IMR-90 (cell line): ENCODE measurements at regions of chr5 and their contacts with region 1.

Region 1: GRCh38 chr5:9544502-9545135 is 1.3 kb downstream of the SEMA5A start:
- DNase-seq: peak; percentile 80
- ATAC-seq: peak; percentile 48
- H3K4me3 ChIP-seq: peak overlapping the region; percentile 73
- H3K27ac ChIP-seq: peak overlapping the region; percentile 35
- H3K4me1 ChIP-seq: peaks cover 4% of the 10 kb centered on the region
- H3K27me3 ChIP-seq: no peaks in the 10 kb centered on the region
- CTCF ChIP-seq: peak; percentile 96
- POLR2A ChIP-seq: 0 out of 2 replicates have a peak, but pooled peaks have one; percentile 42
- RAD21 ChIP-seq: peak; percentile 91

Region 2: GRCh38 chr5:8247049-8247899 is 1297.3 kb before region 1 on chr5:
- CTCF ChIA-PET with region 1: no interaction called
- POLR2A ChIA-PET with region 1: no interaction called
- dilution Hi-C with region 1: no loop called
- in situ Hi-C with region 1: no loop called
- intact Hi-C with region 1: loop called (anchors 2 kb)
- DNase-seq: peak; percentile 1
- ATAC-seq: peak; percentile 17; the same call in 1 of the 2 replicates
- H3K4me3 ChIP-seq: no peak overlapping the region
- H3K27ac ChIP-seq: no peak overlapping the region
- H3K4me1 ChIP-seq: no peaks in the 10 kb centered on the region
- H3K27me3 ChIP-seq: no peaks in the 10 kb centered on the region
- CTCF ChIP-seq: peak; percentile 33
- POLR2A ChIP-seq: no peak
- RAD21 ChIP-seq: peak; percentile 38; the same call in 1 of the 2 replicates

Region 3: GRCh38 chr5:8848998-8849594 is 695.5 kb before region 1 on chr5:
- CTCF ChIA-PET with region 1: no interaction called
- POLR2A ChIA-PET with region 1: no interaction called
- dilution Hi-C with region 1: no loop called
- in situ Hi-C with region 1: no loop called
- intact Hi-C with region 1: loop called (anchors 5 kb)
- DNase-seq: peak; percentile 89
- ATAC-seq: peak; percentile 56
- H3K4me3 ChIP-seq: no peak overlapping the region
- H3K27ac ChIP-seq: no peak overlapping the region
- H3K4me1 ChIP-seq: peaks cover 10% of the 10 kb centered on the region
- H3K27me3 ChIP-seq: no peaks in the 10 kb centered on the region
- CTCF ChIP-seq: no peak
- POLR2A ChIP-seq: no peak
- RAD21 ChIP-seq: no peak

Region 4: GRCh38 chr5:9265441-9266175 is 279.0 kb before region 1 on chr5:
- CTCF ChIA-PET with region 1: no interaction called
- POLR2A ChIA-PET with region 1: no interaction called
- dilution Hi-C with region 1: no loop called
- in situ Hi-C with region 1: no loop called
- intact Hi-C with region 1: loop called (anchors 5 kb)
- DNase-seq: peak; percentile 99
- ATAC-seq: peak; percentile 98
- H3K4me3 ChIP-seq: peak overlapping the region; percentile 8; the same call in 1 of the 2 replicates
- H3K27ac ChIP-seq: peak overlapping the region; percentile 70
- H3K4me1 ChIP-seq: peaks cover 5% of the 10 kb centered on the region
- H3K27me3 ChIP-seq: no peaks in the 10 kb centered on the region
- CTCF ChIP-seq: 0 out of 2 replicates have a peak, but pooled peaks have one; percentile 1
- POLR2A ChIP-seq: peak; percentile 42; the same call in 1 of the 2 replicates
- RAD21 ChIP-seq: 0 out of 2 replicates have a peak, but pooled peaks have one; percentile 14

Region 5: GRCh38 chr5:9562141-9562540 is 17.5 kb after region 1 on chr5:
- CTCF ChIA-PET with region 1: no interaction called
- POLR2A ChIA-PET with region 1: no interaction called
- dilution Hi-C with region 1: no loop called
- in situ Hi-C with region 1: no loop called
- intact Hi-C with region 1: no loop called
- DNase-seq: no peak
- ATAC-seq: no peak
- H3K4me3 ChIP-seq: no peak overlapping the region
- H3K27ac ChIP-seq: no peak overlapping the region
- H3K4me1 ChIP-seq: peaks cover 2% of the 10 kb centered on the region; the same call in 1 of the 2 replicates
- H3K27me3 ChIP-seq: no peaks in the 10 kb centered on the region
- CTCF ChIP-seq: no peak
- POLR2A ChIP-seq: no peak
- RAD21 ChIP-seq: no peak

Region 6: GRCh38 chr5:9782841-9783560 is 238.4 kb after region 1 on chr5:
- CTCF ChIA-PET with region 1: no interaction called
- POLR2A ChIA-PET with region 1: no interaction called
- dilution Hi-C with region 1: no loop called
- in situ Hi-C with region 1: no loop called
- intact Hi-C with region 1: loop called (anchors 5 kb)
- DNase-seq: peak; percentile 91
- ATAC-seq: peak; percentile 77
- H3K4me3 ChIP-seq: no peak overlapping the region
- H3K27ac ChIP-seq: peak overlapping the region; percentile 76; the same call in 1 of the 2 replicates
- H3K4me1 ChIP-seq: peaks cover 19% of the 10 kb centered on the region
- H3K27me3 ChIP-seq: no peaks in the 10 kb centered on the region
- CTCF ChIP-seq: no peak
- POLR2A ChIP-seq: no peak
- RAD21 ChIP-seq: no peak

Region 7: DNA sequence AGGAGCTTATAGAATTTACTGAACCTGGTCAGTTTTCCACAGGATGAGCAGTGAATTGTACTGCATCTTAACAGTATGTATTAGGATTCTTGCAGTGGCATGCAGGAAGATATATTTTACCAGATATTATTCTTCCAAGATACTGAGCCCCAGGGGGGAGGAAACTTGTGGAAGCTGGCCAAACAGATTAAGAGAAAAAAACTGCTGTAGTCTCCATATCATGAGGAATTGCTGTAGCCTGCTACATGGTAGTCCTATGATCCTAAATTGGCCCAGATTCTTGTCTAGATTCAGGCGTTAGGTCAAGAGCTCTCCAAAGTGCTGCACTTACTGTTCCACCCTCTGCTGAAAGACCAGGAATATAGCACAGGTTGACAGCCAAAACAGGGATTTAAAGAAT is 361.0 kb after region 1 on chr5:
- CTCF ChIA-PET with region 1: no interaction called
- POLR2A ChIA-PET with region 1: no interaction called
- dilution Hi-C with region 1: no loop called
- in situ Hi-C with region 1: no loop called
- intact Hi-C with region 1: no loop called
- DNase-seq: no peak
- ATAC-seq: no peak
- H3K4me3 ChIP-seq: no peak overlapping the region
- H3K27ac ChIP-seq: no peak overlapping the region
- H3K4me1 ChIP-seq: no peaks in the 10 kb centered on the region
- H3K27me3 ChIP-seq: no peaks in the 10 kb centered on the region; the same call in 1 of the 2 replicates
- CTCF ChIP-seq: no peak
- POLR2A ChIP-seq: no peak
- RAD21 ChIP-seq: no peak

Region 8: GRCh38 chr5:10145923-10146401 is 601.3 kb after region 1 on chr5:
- CTCF ChIA-PET with region 1: no interaction called
- POLR2A ChIA-PET with region 1: no interaction called
- dilution Hi-C with region 1: no loop called
- in situ Hi-C with region 1: no loop called
- intact Hi-C with region 1: loop called (anchors 1 kb)
- DNase-seq: peak; percentile 66
- ATAC-seq: peak; percentile 71
- H3K4me3 ChIP-seq: no peak overlapping the region
- H3K27ac ChIP-seq: no peak overlapping the region
- H3K4me1 ChIP-seq: no peaks in the 10 kb centered on the region
- H3K27me3 ChIP-seq: no peaks in the 10 kb centered on the region; the same call in 1 of the 2 replicates
- CTCF ChIP-seq: peak; percentile 55
- POLR2A ChIP-seq: no peak
- RAD21 ChIP-seq: peak; percentile 65